GM10248 (cell line): ENCODE measurements at regions of chr12 and their contacts with region 1.

Region 1: GRCh38 chr12:122399592-122400373 is 22.7 kb downstream of the CLIP1 start:
- DNase-seq: peak; percentile 77
- CTCF ChIP-seq: peak; percentile 60

Region 2: DNA sequence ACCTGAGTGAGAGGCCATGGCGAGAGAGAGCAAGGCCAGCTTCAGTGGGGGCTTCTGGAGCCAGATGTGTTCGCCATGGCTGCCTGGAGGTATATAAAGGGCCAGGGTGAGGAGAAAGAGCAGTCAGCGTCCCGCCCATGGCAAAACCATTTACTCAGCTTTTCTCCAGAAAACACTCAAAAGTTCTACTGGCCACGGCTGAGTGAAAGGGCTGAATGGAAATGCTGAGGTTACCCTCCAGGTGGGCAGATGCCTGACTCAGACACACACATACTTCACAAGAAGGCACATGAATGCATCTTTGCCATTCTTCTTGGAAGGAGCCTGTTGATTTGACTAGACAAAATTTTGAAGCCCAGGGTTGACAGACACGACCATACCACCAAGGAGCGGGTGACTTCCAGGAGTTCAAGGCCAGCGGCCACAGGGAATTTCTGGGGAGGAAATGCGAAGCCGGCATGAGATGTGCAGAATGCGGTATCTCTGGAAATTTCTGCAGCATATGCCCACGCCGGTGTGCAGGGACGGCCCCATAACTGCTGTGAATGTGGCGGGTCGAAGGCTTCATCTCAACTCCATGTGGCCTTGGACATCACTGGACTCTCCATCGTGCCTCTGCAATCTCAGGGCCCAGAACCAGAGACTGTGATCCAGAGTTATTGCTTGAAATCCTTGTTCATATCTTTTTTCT is 225.5 kb before region 1 on chr12 and contains the start of gene IL31:
- CTCF ChIA-PET with region 1: no interaction called
- POLR2A ChIA-PET with region 1: no interaction called
- DNase-seq: no peak
- CTCF ChIP-seq: no peak

Region 3: DNA sequence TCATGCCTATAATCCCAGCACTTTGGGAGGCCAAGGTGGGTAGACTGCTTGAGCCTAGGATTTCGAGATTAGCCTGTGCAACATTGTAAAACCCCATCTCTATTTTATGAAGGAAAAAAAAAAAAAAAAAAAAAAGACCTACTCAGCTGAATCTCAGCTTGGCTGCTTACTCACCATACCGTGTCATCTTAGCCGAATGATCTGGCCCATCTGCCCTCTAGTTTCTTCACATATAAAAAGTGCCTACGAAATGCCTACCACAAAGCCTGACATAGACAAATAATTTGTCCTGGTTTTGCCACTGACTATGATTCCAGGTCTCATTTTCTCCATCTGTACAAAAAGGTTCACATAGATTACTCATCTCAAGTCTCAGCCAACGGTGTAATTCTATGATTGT is 184.0 kb before region 1 on chr12:
- CTCF ChIA-PET with region 1: no interaction called
- POLR2A ChIA-PET with region 1: no interaction called
- DNase-seq: no peak
- CTCF ChIP-seq: no peak

Region 4: GRCh38 chr12:122374707-122375106 is 25.1 kb before region 1 on chr12:
- CTCF ChIA-PET with region 1: interaction called, 13 read pairs
- POLR2A ChIA-PET with region 1: no interaction called
- DNase-seq: no peak
- CTCF ChIP-seq: no peak

Region 5: GRCh38 chr12:122413516-122414404 is 14.0 kb after region 1 on chr12:
- CTCF ChIA-PET with region 1: interaction called, 97 read pairs
- POLR2A ChIA-PET with region 1: interaction called, 4 read pairs
- DNase-seq: no peak
- CTCF ChIP-seq: no peak

Region 6: GRCh38 chr12:122427412-122427811 is 27.6 kb after region 1 on chr12:
- CTCF ChIA-PET with region 1: interaction called, 25 read pairs
- POLR2A ChIA-PET with region 1: interaction called, 4 read pairs
- DNase-seq: no peak
- CTCF ChIP-seq: no peak

Region 7: DNA sequence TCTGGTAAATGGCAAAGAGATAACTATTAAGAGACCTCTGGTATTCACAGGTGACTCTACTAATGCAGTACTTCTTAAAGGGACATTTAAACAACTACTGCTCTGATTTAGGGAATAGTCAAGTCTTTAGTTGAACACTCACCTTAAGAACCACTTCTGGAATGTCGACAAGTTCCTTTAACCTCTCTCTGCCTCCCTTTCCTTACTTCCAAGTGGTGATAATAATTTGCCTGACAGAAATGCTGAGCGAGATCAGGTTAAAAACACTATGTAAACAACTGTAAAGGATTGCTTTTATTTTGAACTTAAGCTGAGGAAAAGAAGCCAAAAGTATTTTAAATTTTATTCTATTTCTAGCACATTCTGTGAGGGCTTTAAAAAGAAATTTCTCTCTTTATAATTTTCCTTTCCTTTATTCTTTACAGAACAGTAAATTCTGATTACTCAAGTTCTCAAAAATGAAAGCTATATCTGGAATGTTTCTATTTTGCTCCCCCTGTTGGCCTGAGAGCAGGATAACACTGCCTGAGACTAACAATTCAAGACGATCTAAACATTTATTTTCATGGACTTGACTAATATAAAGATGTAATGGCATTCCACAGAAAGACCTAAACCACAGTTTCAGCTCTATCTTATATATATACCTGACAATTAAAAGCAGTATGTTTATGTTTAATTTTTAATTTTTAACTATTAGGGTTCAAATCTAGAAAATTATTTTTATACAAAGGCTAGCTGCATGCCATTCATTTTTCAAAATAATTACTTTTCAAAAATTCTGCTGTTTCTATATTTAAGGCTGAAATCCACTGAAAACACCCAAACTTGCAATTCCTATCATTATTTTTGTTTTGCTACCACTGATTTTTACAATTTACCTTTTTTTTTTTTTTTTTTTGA is 71.8 kb after region 1 on chr12:
- CTCF ChIA-PET with region 1: interaction called, 154 read pairs
- POLR2A ChIA-PET with region 1: interaction called, 6 read pairs
- DNase-seq: peak; percentile 54
- CTCF ChIP-seq: peak; percentile 80

Region 8: DNA sequence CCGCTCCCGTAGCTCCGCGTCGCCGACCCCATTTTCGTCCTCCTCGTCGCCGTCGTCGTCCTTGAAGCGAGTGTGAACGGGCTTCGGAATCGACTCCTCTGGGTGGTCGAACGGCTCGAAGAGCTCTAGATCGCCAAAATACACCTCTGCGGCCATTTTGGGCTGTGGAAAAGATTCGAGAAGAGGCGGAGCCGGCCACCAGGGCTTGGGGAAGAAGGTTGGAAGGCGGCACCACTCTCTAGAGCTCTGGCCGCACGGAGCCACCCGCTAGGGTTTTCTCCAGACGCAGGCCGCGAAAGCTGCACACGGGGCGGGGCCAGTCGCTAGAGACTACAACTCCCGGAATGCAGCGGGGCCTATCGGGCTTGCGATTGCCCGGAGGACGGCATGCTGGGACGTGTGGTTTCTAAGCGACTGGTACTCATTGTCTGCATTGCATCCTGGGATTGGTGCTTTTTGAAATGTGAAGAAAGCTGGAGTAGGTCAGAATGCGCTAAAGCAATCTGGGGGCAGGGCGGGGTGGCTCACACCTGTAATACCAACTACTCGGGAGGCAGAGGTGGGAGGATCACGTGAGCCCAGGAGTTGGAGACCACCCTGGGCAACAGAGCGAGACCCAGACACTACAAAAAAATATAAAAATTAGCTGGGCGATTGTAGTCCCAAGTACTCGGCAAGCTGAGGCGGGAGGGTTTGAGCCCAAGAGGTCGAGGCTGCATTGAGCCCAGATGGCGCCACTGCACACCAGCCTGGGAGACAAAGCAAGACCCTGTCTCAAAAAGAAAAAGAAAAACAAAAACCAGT is 101.1 kb after region 1 on chr12 and contains the start of gene ZCCHC8:
- CTCF ChIA-PET with region 1: interaction called, 11 read pairs
- POLR2A ChIA-PET with region 1: interaction called, 6 read pairs
- DNase-seq: peak; percentile 94
- CTCF ChIP-seq: peak; percentile 30

Region 9: DNA sequence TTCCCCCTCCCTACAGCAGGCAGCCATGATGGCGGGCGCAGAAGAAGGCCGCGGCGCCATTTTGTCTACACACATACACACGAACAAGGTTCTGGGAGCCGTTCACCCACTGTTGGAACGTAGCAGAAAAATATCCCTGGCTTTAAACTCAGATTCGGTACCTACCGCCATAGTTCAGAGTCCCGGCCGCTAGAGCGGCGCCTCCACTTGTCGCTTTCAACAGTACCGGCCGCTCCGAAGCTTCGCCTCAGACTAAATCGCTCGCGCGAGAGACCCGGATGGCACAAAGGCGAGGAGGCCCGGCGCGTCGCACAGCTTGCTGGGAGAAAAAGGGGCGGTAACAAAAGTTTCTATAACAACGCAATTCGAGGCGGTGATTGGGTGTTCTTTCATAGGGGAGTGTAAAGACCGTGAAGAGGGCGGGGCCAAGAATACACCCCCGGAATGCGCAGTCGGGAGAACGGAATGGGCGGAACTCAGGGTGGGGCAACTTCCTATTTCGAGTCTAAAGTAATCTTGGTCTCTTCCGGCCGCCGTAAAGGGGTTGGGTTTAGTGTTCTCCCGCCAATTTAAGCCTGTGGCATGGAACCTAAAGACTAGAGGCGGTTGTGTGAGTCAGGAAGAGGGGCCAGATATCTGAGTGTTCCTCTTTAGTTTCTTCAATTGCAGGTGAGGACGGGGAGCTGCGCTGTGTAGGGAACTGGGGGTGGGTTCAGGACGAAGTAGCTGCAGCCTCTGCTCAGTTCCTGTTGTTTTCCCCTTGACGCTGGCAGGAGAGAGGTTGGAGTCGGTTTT is 127.1 kb after region 1 on chr12 and contains the starts of genes KNTC1 and RSRC2:
- CTCF ChIA-PET with region 1: no interaction called
- POLR2A ChIA-PET with region 1: interaction called, 10 read pairs
- DNase-seq: peak; percentile 97
- CTCF ChIP-seq: no peak